ENCODE measurements at regions of chr1 and their contacts with region 1.

Region 1: GRCh38 chr1:145996433-145997015 is at the start of gene TXNIP:
- DNase-seq: peak; percentile 90
- ATAC-seq: peak; percentile 83
- H3K4me3 Mint-ChIP-seq: peak within 1 kb of the TSS; percentile 100
- H3K27ac Mint-ChIP-seq: peak within 1 kb of the TSS; percentile 99
- H3K4me1 Mint-ChIP-seq: peaks cover 54% of the 10 kb centered on the region
- H3K27me3 Mint-ChIP-seq: no peaks in the 10 kb centered on the region
- total RNA-seq, gene TXNIP: 678 to 725 TPM

Region 2: DNA sequence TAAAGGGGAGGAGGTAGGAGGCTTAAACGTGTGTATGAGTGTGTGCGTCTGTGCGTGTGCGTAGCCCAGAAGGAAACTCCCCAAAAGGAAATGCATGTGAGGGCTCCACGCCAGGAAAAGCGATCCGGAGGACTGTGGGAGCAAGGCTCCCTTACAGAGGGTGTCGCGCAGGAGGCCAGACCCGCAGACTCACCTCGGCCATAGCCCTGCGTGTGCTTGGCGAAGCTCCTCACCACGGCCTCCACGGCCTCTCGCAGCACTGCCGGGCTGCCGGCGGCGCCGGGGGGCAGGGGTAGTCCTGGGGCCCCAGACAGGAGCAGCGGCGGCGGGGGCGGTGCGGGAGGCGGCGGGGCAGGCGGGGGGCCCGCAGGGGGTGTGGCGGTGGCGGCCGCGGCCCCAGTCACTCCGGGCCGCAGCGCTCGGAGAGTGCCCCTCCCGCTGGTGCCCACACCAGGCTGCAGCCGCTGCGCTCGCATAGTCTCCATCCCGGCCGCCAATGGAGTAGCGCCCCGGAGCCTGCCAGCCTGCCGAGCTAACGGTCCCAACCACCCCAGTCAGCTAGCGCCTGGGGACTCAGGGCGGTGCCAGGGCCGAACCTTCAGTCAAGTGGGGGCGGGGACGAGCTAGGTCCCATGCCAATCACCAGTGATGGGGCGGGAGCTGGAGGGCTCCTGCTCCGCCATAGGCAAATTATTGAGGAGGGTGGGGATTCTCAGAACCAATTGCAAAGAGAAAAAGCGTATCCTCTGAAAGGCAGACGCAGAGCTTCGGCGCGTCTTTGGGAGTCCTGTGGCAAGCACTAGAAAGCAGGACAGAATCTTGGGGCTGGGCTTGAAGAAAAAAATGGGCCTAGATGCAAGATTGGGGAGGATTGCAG is 38.8 kb before region 1 on chr1 and contains the start of gene LIX1L:
- POLR2A ChIA-PET with region 1: interaction called, 59 read pairs
- DNase-seq: peak; percentile 89
- ATAC-seq: peak; percentile 90
- H3K4me3 Mint-ChIP-seq: peak within 1 kb of the TSS; percentile 99
- H3K27ac Mint-ChIP-seq: peak within 1 kb of the TSS; percentile 94
- H3K4me1 Mint-ChIP-seq: peaks cover 66% of the 10 kb centered on the region
- H3K27me3 Mint-ChIP-seq: no peaks in the 10 kb centered on the region
- total RNA-seq, gene LIX1L: 54.0 to 57.5 TPM

Region 3: DNA sequence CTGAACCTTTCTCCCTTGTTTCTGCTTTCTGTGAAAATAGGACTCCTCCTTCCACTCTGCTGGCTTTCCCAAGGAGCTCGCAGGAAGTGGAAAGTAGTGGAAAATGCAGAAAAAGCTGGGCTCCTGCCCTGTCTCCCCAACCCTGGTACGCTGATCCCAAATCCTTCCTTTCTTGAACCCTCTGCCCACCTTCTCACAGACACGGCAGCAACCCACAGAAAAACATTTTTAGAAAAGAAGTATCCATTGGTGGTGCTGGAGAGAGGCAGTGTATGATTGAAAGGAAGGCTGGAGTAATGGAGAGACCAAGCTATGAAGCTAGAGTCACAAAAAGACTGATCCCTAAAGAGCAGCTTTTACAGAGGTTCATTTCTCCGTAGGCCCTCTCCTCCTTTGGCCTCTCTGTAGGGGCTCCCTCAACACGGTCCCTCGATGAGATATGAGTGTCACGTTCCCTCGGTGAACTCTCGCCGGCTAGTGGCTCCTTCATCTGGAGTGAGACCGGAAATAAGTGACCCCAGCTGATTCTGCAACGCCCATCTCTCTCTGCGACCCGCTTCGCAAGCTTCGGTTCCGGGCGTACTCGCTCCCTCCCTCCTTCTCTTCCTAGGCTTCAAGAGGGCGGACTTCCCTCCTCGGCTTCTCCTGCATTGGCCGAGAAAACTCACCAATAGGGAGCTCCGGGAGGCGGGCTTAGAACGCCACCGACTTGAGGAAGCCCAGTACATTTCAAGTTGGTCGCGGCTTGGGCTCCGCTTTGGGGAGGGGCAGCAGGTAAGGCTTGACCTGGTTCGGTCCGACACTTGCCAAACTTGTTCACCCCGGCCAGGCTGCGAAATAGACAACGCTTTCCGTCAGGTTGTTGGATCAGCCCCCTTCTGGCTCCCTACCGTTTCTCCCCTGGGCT is 32.3 kb before region 1 on chr1 and contains the starts of genes ANKRD34A and POLR3GL:
- POLR2A ChIA-PET with region 1: interaction called, 59 read pairs
- DNase-seq: peak; percentile 85
- ATAC-seq: peak; percentile 89
- H3K4me3 Mint-ChIP-seq: peak within 1 kb of the TSS; percentile 94
- H3K27ac Mint-ChIP-seq: peak within 1 kb of the TSS; percentile 94
- H3K4me1 Mint-ChIP-seq: peaks cover 39% of the 10 kb centered on the region
- H3K27me3 Mint-ChIP-seq: no peaks in the 10 kb centered on the region
- total RNA-seq, gene ANKRD34A: 2.2 to 2.8 TPM
- total RNA-seq, gene POLR3GL: 32.6 to 34.9 TPM

Region 4: GRCh38 chr1:146007506-146008133 is 11.1 kb after region 1 on chr1:
- POLR2A ChIA-PET with region 1: interaction called, 78 read pairs
- DNase-seq: no peak
- ATAC-seq: no peak
- H3K4me3 Mint-ChIP-seq: peak overlapping the region; percentile 77
- H3K27ac Mint-ChIP-seq: peak overlapping the region; percentile 88
- H3K4me1 Mint-ChIP-seq: peaks cover 30% of the 10 kb centered on the region
- H3K27me3 Mint-ChIP-seq: no peaks in the 10 kb centered on the region

Region 5: GRCh38 chr1:146036965-146037646 is 40.6 kb after region 1 on chr1:
- POLR2A ChIA-PET with region 1: interaction called, 10 read pairs
- DNase-seq: peak; percentile 79
- ATAC-seq: peak; percentile 45
- H3K4me3 Mint-ChIP-seq: peak overlapping the region; percentile 90
- H3K27ac Mint-ChIP-seq: peak overlapping the region; percentile 94
- H3K4me1 Mint-ChIP-seq: peaks cover 33% of the 10 kb centered on the region
- H3K27me3 Mint-ChIP-seq: peaks cover 11% of the 10 kb centered on the region